PC-3 (cell line): ENCODE measurements at regions of chr14 and their contacts with region 1.

Region 1: DNA sequence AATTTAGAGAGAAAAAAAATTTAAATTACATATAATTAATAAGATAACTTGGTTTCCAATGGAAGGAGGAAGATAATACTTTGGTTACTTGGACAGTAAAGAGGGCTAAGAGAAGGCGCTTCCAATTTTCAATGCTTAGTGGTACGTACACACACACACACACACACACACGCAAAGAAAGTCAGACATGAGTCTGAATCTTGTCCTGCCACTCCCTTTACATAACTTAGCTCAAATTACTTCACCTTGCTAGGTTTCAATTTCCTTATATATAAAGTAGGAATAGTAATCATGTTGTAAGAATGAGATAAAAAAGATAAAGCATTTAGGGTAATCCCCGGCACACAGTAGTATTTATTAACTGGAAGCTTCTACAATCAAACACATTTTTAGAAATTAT is 39.7 kb upstream of the VCPKMT start:
- DNase-seq: peak; percentile 73
- ATAC-seq: peak; percentile 96
- H3K4me3 ChIP-seq: no peak overlapping the region
- H3K27ac ChIP-seq: no peak overlapping the region
- H3K4me1 ChIP-seq: peaks cover 10% of the 10 kb centered on the region
- H3K27me3 ChIP-seq: no peaks in the 10 kb centered on the region
- CTCF ChIP-seq: no peak

Region 2: DNA sequence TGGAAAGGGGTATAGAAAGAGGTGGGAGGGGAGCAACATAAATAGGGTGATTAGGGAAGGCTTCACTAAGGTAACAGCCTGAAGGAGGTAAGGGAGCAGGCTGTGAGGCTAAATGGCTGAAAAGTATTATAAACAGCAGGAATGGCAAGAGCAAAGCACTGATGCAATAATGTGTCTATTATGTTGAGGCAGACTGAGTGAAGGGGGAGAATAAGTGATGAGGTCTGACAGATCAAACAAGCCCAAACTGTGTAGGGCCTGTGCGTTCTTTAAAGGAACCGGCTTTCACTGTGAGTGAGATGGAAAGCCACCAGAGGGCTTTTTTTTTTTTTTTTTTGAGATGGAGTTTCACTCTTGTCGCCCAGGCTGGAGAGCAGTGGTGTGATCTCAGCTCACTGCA is 33.0 kb before region 1 on chr14:
- CTCF ChIA-PET with region 1: no interaction called
- POLR2A ChIA-PET with region 1: interaction called, 12 read pairs
- intact Hi-C with region 1: no loop called
- DNase-seq: no peak
- ATAC-seq: no peak
- H3K4me3 ChIP-seq: no peak overlapping the region
- H3K27ac ChIP-seq: no peak overlapping the region
- H3K4me1 ChIP-seq: no peaks in the 10 kb centered on the region
- H3K27me3 ChIP-seq: no peaks in the 10 kb centered on the region
- CTCF ChIP-seq: no peak